B cell (primary cell): ENCODE measurements at regions of chr12 and their contacts with region 1.

Region 1: GRCh38 chr12:132470978-132471857 is 18.7 kb upstream of the FBRSL1 start:
- DNase-seq: peak; percentile 87
- ATAC-seq: peak; percentile 70
- H3K4me3 ChIP-seq: peak overlapping the region in 2 of 5 experiments; percentile 42 to 55
- H3K4me3 Mint-ChIP-seq: peak overlapping the region; percentile 64
- H3K27ac ChIP-seq: peak overlapping the region; percentile 75 to 83
- H3K27ac Mint-ChIP-seq: peak overlapping the region; percentile 92
- H3K4me1 ChIP-seq: peaks cover 59 to 76% of the 10 kb centered on the region in 2 donors
- H3K4me1 Mint-ChIP-seq: peaks cover 55% of the 10 kb centered on the region
- H3K27me3 ChIP-seq: no peaks in the 10 kb centered on the region
- H3K27me3 Mint-ChIP-seq: no peaks in the 10 kb centered on the region
- CTCF ChIP-seq: no peak

Region 2: DNA sequence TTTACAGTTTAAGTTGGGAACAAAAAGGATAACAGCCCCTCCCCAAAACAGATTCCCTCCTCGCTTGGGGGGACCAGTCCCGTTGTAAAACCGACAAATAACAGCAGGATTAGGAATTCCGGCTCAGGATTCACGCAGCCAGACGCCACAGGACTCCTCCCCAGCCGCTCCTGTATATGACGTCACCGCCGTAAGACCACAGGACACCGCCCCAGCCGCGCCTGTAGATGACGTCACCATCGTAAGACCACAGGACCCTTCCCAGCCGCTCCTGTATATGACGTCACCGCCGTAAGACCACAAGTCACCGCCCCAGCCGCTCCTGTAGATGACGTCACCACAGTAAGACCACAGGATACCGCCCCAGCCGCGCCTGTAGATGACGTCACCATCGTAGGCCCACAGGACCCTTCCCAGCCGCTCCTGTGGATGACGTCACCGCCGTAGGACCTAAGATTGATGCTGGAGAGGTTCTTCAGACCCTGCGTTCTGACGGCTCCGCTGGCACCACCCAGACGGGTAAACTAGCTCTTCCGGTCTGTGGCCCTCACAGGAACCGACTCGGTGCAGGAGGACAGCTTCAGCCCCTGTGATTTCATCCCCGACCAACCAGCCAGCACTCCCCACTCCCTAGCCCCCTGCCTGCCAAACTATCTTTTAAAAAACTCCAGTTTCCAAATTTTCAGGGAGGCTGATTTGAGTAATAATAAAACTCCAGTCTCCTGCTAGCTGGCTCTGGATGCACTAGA is 25.2 kb before region 1 on chr12:
- CTCF ChIA-PET with region 1: interaction called, 4 read pairs
- POLR2A ChIA-PET with region 1: no interaction called
- intact Hi-C with region 1: loop called (anchors 2 kb)
- DNase-seq: peak; percentile 81
- ATAC-seq: peak; percentile 6
- H3K4me3 ChIP-seq: peak overlapping the region; percentile 2 to 46 (median 42)
- H3K4me3 Mint-ChIP-seq: peak overlapping the region; percentile 83
- H3K27ac ChIP-seq: peak overlapping the region; percentile 96
- H3K27ac Mint-ChIP-seq: peak overlapping the region; percentile 99
- H3K4me1 ChIP-seq: peaks cover 59 to 87% of the 10 kb centered on the region in 2 donors
- H3K4me1 Mint-ChIP-seq: peaks cover 54% of the 10 kb centered on the region
- H3K27me3 ChIP-seq: no peaks in the 10 kb centered on the region
- H3K27me3 Mint-ChIP-seq: no peaks in the 10 kb centered on the region
- CTCF ChIP-seq: no peak

Region 3: DNA sequence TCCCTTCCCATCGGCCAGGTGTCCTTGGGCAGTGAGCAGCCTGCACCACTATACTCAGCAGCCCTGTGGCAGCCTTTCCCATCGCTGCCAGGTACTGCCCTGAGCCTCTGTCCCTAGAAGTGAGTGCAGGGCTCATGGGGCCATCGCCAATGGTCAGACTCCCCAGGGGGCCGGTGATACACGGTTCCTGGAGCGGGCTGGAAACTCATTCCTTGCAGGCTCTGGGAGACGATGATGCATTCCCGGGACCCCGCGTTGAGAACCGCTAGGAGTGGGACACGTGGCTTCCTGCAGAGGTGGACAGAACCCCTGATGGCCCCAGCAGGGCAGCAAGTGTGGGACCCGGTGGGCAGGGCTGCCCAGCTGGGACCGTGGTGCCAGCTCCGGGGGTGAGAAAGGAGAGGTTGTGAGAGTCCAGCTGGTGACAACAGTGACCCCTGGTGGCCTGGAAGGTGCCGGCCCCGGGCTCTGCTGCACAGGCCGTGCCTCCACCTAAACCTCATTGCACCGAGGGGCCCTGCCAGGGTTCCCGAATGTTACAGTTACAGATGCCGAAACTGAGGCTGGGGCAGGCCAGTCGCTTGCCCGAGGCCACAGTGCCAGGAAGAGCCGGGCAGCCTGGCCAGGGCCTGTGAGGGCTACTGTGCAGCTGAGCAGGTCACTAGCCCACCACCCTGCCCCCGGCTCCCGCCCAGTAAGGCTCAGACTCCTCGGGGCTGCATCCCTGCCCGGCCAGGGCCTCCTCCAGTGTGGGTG is 52.5 kb after region 1 on chr12:
- CTCF ChIA-PET with region 1: no interaction called
- POLR2A ChIA-PET with region 1: no interaction called
- intact Hi-C with region 1: no loop called
- DNase-seq: peak; percentile 82
- ATAC-seq: peak; percentile 79
- H3K4me3 ChIP-seq: no peak overlapping the region
- H3K4me3 Mint-ChIP-seq: no peak overlapping the region
- H3K27ac ChIP-seq: no peak overlapping the region
- H3K27ac Mint-ChIP-seq: no peak overlapping the region
- H3K4me1 ChIP-seq: peaks cover 5 to 12% of the 10 kb centered on the region in 2 donors
- H3K4me1 Mint-ChIP-seq: peaks cover 11% of the 10 kb centered on the region
- H3K27me3 ChIP-seq: no peaks in the 10 kb centered on the region
- H3K27me3 Mint-ChIP-seq: no peaks in the 10 kb centered on the region
- CTCF ChIP-seq: peak; percentile 90